A673 (cell line): ENCODE measurements at regions of chr14 and their contacts with region 1.

Region 1: GRCh38 chr14:60064491-60065072 is 27.1 kb upstream of the PCNX4 start:
- DNase-seq: peak; percentile 45
- H3K4me3 ChIP-seq: no peak overlapping the region
- H3K27ac ChIP-seq: no peak overlapping the region
- H3K4me1 ChIP-seq: no peaks in the 10 kb centered on the region
- H3K27me3 ChIP-seq: no peaks in the 10 kb centered on the region
- CTCF ChIP-seq: peak; percentile 67

Region 2: GRCh38 chr14:60164712-60165546 is 100.3 kb after region 1 on chr14 and contains the start of gene DHRS7:
- CTCF ChIA-PET with region 1: interaction called, 3 read pairs
- POLR2A ChIA-PET with region 1: no interaction called
- intact Hi-C with region 1: loop called (anchors 5 kb)
- DNase-seq: peak; percentile 70
- H3K4me3 ChIP-seq: peak within 1 kb of the TSS; percentile 79
- H3K27ac ChIP-seq: peak within 1 kb of the TSS; percentile 28
- H3K4me1 ChIP-seq: no peaks in the 10 kb centered on the region
- H3K27me3 ChIP-seq: no peaks in the 10 kb centered on the region
- CTCF ChIP-seq: peak; percentile 30; the same call in 1 of the 2 replicates
- total RNA-seq, gene DHRS7: 16.3 and 17.9 TPM in 2 replicates

Region 3: DNA sequence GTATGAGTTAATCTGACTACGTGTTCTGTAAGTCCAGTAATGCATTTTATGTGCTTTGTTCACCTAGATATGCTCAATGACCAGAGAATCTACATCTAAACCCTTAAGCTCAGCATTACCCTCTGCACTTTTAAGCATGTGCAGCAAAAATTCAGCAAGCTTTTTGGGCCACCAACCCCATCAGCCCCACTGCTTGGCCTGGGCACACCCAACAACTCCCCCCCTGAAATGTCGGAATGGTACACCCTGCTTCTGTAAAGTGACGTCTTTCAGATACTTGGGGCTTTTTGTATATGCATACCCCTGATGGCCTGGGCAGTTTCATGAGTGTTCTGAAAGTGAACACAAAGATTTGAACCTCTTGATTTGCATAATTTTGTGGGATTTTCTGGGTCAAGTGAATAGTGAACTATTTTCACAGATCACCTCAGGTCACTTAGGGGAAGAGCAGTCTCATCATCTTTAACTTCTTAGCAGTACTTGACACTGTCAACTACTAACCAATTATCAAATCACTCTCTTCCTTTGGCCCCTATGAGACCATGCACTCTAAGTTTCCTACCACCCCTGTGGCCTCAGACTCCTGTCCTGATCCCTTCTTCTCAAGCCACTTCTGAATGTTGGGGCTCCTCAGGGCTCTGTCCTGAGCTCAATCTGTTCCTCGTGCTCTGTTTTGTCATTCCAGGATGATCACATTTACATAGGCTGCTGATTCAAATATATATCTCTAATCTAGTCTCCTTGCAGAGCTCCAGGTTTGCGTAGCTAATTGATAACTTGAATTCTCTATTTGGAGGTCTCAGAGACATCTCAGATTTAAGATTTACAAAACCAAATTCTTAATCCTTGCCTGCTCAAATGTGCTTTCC is 148.2 kb after region 1 on chr14:
- CTCF ChIA-PET with region 1: no interaction called
- POLR2A ChIA-PET with region 1: no interaction called
- intact Hi-C with region 1: no loop called
- DNase-seq: no peak
- H3K4me3 ChIP-seq: no peak overlapping the region
- H3K27ac ChIP-seq: no peak overlapping the region
- H3K4me1 ChIP-seq: no peaks in the 10 kb centered on the region
- H3K27me3 ChIP-seq: no peaks in the 10 kb centered on the region
- CTCF ChIP-seq: no peak